Activated CD4-positive, alpha-beta memory T cell treated with anti-CD3 and anti-CD28 coated beads for 36 hours (primary cell): ENCODE measurements at regions of chr5 and their contacts with region 1.

Region 1: DNA sequence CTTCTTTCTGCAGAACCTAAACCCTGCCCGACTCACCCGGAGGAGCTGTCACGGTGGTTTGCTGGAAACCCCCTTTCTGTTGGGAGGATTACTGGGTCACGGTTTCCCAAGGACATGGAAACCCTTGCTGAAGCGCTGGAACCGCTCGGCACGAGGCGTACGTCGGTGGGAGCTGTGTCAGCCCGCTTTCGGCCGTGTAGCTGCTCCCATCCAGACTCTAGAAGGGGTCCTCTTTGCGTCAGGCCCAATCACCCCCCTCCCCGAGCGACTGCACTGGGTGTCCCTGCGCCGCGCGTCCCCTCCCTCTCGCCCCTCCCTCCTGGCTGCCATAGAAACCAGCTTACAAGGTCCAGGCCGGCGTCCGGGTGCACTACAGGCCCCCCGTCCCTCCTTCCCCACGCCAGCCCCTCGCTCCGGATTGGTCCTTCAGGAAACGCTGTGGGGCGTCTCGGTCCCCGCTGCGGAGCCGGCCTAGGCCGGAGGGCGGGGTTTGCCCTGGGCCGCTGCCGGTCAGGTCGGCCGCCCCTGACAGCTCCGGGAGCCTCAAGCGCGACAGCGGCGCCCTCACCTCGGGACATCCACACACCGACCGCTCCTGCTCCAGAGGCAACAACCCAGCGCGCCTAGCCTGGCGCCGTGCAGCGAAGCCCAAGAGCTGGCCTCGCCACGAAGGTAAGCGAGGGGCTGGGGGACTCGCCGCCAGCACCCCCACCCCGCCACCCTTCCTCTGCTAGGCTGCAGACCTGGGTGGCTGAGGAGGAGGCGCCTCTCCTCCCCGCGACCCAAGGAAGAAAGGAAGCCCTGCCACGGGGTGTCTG is at the start of gene NIM1K:
- DNase-seq: peak; percentile 62
- H3K4me3 Mint-ChIP-seq: peak within 1 kb of the TSS; percentile 78
- H3K27ac Mint-ChIP-seq: no peak within 1 kb of the TSS
- H3K4me1 Mint-ChIP-seq: peaks cover 31% of the 10 kb centered on the region
- H3K27me3 Mint-ChIP-seq: peaks cover 16% of the 10 kb centered on the region
- total RNA-seq, gene NIM1K: 0.75 to 1.00 TPM

Region 2: DNA sequence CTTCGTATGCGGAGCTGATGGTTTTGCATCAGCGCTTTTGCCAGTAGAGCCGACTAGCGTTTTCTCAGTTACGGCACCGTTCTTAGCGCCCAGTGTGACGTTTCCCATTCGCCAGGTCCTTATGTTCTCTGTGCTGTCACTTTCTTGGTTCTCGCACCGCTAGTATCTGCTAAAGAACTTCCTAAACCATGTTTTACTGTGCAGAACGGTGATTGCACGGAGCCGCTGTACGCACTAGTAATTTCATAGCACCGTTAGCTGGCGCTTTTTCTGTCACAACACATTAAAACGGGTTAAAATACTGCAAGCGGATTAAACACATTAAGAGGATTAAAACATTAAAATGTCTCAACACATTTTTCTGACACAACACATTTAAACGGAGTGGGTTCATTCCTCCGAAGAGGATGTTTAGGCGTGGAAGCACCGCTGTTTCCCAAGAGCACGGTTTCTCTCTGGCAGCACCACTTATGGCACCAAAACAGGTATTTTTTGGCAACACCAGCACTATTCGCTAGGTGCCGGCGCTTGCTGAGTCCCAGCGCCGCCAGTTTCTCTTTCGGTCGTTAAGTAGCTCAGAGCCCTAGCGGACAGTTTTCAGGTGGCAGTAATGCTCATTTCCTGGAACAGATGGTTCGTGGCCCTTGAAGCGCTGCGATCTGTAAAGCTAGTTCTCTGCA is 172.2 kb before region 1 on chr5:
- CTCF ChIA-PET with region 1: no interaction called
- POLR2A ChIA-PET with region 1: interaction called, 3 read pairs
- intact Hi-C with region 1: loop called (anchors 5 kb)
- DNase-seq: peak; percentile 91
- H3K4me3 Mint-ChIP-seq: peak overlapping the region; percentile 97
- H3K27ac Mint-ChIP-seq: peak overlapping the region; percentile 98
- H3K4me1 Mint-ChIP-seq: peaks cover 32% of the 10 kb centered on the region
- H3K27me3 Mint-ChIP-seq: no peaks in the 10 kb centered on the region

Region 3: GRCh38 chr5:43156388-43156787 is 35.6 kb before region 1 on chr5:
- CTCF ChIA-PET with region 1: no interaction called
- POLR2A ChIA-PET with region 1: no interaction called
- intact Hi-C with region 1: loop called (anchors 2 kb)
- DNase-seq: peak; percentile 21
- H3K4me3 Mint-ChIP-seq: no peak overlapping the region
- H3K27ac Mint-ChIP-seq: peak overlapping the region; percentile 19
- H3K4me1 Mint-ChIP-seq: peaks cover 41% of the 10 kb centered on the region
- H3K27me3 Mint-ChIP-seq: no peaks in the 10 kb centered on the region

Region 4: GRCh38 chr5:43227655-43228054 is 35.7 kb after region 1 on chr5:
- CTCF ChIA-PET with region 1: no interaction called
- POLR2A ChIA-PET with region 1: no interaction called
- intact Hi-C with region 1: loop called (anchors 5 kb)
- DNase-seq: no peak
- H3K4me3 Mint-ChIP-seq: no peak overlapping the region
- H3K27ac Mint-ChIP-seq: no peak overlapping the region
- H3K4me1 Mint-ChIP-seq: no peaks in the 10 kb centered on the region
- H3K27me3 Mint-ChIP-seq: no peaks in the 10 kb centered on the region

Region 5: DNA sequence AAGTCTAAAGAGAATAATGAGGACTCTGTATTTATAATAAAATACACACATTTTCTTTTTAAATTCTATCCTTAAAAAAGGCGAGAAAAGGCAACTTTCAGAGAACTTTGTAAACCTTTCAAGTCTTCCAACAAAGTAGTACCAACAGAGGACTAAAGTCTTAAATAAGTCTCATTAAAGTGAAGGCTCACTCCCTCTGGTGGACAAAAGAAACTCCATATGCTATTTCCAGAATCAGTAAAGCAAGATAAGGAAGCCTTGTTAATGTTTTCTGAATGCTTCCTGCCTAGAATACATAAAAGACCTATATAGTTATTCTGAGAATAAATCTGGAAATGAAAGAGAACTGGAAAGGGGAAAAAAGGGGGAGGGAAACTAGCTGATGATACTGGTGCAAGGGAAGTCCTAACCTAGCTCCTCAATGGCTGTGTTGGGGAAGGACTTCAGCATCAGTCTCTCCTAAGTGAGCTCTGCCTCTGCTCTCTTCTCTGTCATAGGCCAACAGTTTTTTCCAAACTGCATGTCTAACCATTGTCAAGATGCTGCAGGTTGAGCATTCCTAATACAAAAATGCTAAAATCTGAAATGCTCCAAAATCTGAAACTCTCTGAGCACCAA is 114.1 kb after region 1 on chr5:
- CTCF ChIA-PET with region 1: interaction called, 3 read pairs
- POLR2A ChIA-PET with region 1: no interaction called
- intact Hi-C with region 1: loop called (anchors 1 kb)
- DNase-seq: no peak
- H3K4me3 Mint-ChIP-seq: peak overlapping the region; percentile 2
- H3K27ac Mint-ChIP-seq: peak overlapping the region; percentile 78
- H3K4me1 Mint-ChIP-seq: peaks cover 84% of the 10 kb centered on the region
- H3K27me3 Mint-ChIP-seq: no peaks in the 10 kb centered on the region